ENCODE measurements at regions of chr2 and their contacts with region 1.

Region 1: DNA sequence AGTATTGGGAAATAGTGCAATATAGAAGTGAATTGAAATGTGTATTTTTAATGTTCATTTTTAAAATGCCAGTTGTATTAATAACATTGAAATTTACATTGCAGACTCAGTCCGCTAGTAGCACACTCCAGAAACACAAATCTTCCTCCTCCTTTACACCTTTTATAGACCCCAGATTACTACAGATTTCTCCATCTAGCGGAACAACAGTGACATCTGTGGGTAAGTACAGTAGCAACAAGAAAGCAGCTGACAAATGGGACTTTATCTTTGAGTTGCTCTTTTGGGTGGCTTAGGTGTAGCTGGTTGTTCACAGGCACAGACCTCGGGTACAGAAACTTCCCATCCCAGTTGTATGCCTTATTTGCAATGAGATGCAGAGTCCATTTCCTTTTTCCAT is 118.2 kb upstream of the IL1R2 start:
- DNase-seq: no peak
- H3K4me3 ChIP-seq: no peak overlapping the region
- H3K27ac ChIP-seq: no peak overlapping the region
- H3K4me1 ChIP-seq: no peaks in the 10 kb centered on the region
- H3K27me3 ChIP-seq: no peaks in the 10 kb centered on the region
- CTCF ChIP-seq: no peak
- EP300 ChIP-seq: no peak
- POLR2A ChIP-seq: no peak

Region 2: GRCh38 chr2:101983928-101984327 is 110.4 kb after region 1 on chr2:
- intact Hi-C with region 1: loop called in 1 of 4 experiments (anchors 10 kb)
- DNase-seq: no peak
- H3K4me3 ChIP-seq: no peak overlapping the region
- H3K27ac ChIP-seq: no peak overlapping the region
- H3K4me1 ChIP-seq: peaks cover 11% of the 10 kb centered on the region
- H3K27me3 ChIP-seq: no peaks in the 10 kb centered on the region
- CTCF ChIP-seq: peak in 2 of 3 donors; percentile 8 to 11
- EP300 ChIP-seq: no peak
- POLR2A ChIP-seq: no peak

Measured in ovary (tissue), 10 donors.